T-cell (primary cell): ENCODE measurements at regions of chr2 and their contacts with region 1.

Region 1: DNA sequence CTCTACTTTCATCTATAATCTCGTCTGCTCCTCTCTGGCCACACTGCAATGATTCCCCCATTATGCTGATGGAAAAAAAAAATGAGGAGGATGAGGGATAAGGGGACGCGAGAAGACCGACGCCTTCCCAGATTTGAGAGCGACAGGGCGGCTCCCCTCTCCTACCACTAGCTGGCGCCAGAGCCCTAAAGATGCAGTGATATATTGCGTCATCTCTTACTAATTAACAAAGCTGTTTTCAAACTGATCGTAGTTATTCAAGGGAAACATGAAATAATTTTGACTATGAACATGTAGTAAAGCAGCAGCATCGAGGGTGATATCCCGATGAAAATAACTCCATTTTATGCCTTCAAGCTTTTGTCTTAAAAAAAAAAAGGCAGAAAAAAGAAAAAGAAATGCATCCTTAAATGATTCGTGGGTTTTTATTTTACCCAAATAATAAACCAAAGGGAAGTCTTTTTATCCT is 48.0 kb upstream of the HNRNPA3 start:
- DNase-seq: peak; percentile 50 to 89 (median 73)
- ATAC-seq: peak; percentile 71 to 83 (median 80)
- H3K4me3 ChIP-seq: peak overlapping the region; percentile 2 to 31
- H3K4me3 Mint-ChIP-seq: no peak overlapping the region
- H3K27ac ChIP-seq: peak overlapping the region; percentile 47
- H3K27ac Mint-ChIP-seq: no peak overlapping the region
- H3K4me1 ChIP-seq: peaks cover 13 to 16% of the 10 kb centered on the region in 2 experiments
- H3K4me1 Mint-ChIP-seq: peaks cover 12 to 21% (median 20%) of the 10 kb centered on the region in 3 donors
- H3K27me3 ChIP-seq: no peaks in the 10 kb centered on the region
- H3K27me3 Mint-ChIP-seq: peaks cover 0 to 2% of the 10 kb centered on the region in 2 donors

Region 2: GRCh38 chr2:175218551-175218950 is 1946.1 kb before region 1 on chr2:
- CTCF ChIA-PET with region 1: no interaction called
- POLR2A ChIA-PET with region 1: no interaction called
- DNase-seq: no peak
- ATAC-seq: no peak
- H3K4me3 ChIP-seq: no peak overlapping the region
- H3K4me3 Mint-ChIP-seq: no peak overlapping the region
- H3K27ac ChIP-seq: no peak overlapping the region
- H3K27ac Mint-ChIP-seq: no peak overlapping the region
- H3K4me1 ChIP-seq: no peaks in the 10 kb centered on the region
- H3K4me1 Mint-ChIP-seq: no peaks in the 10 kb centered on the region
- H3K27me3 ChIP-seq: peaks cover 2 to 3% of the 10 kb centered on the region in 2 experiments
- H3K27me3 Mint-ChIP-seq: peaks cover 24 to 31% of the 10 kb centered on the region in 2 donors

Region 3: GRCh38 chr2:176978921-176979320 is 185.7 kb before region 1 on chr2:
- CTCF ChIA-PET with region 1: no interaction called
- POLR2A ChIA-PET with region 1: no interaction called
- DNase-seq: no peak
- ATAC-seq: no peak
- H3K4me3 ChIP-seq: no peak overlapping the region
- H3K4me3 Mint-ChIP-seq: no peak overlapping the region
- H3K27ac ChIP-seq: no peak overlapping the region
- H3K27ac Mint-ChIP-seq: no peak overlapping the region
- H3K4me1 ChIP-seq: no peaks in the 10 kb centered on the region
- H3K4me1 Mint-ChIP-seq: no peaks in the 10 kb centered on the region
- H3K27me3 ChIP-seq: peaks cover 0 to 3% of the 10 kb centered on the region in 2 experiments
- H3K27me3 Mint-ChIP-seq: peaks cover 6 to 10% of the 10 kb centered on the region in 2 donors

Region 4: DNA sequence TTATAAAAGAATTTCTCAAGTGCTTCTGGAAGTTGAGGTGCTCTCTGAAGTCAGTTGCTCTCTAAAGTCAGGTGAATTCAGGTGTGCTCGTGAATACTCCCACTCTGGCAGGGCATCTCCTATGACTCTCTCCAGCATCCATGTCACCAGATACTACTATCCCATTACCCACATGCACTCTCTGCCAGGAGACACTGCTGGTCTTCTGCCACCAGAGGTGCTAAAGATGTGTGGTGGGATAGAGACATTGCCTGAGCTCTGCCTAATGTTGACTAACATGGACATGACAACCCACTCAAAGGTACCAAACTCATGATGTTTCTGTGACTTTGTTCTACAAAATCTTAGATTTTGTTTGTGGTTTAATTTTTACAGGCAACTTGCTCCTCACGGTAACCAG is 58.4 kb before region 1 on chr2:
- CTCF ChIA-PET with region 1: no interaction called
- POLR2A ChIA-PET with region 1: no interaction called
- DNase-seq: peak in 1 of 35 experiments; percentile 2
- ATAC-seq: no peak
- H3K4me3 ChIP-seq: no peak overlapping the region
- H3K4me3 Mint-ChIP-seq: no peak overlapping the region
- H3K27ac ChIP-seq: no peak overlapping the region
- H3K27ac Mint-ChIP-seq: no peak overlapping the region
- H3K4me1 ChIP-seq: no peaks in the 10 kb centered on the region
- H3K4me1 Mint-ChIP-seq: no peaks in the 10 kb centered on the region
- H3K27me3 ChIP-seq: no peaks in the 10 kb centered on the region
- H3K27me3 Mint-ChIP-seq: peaks cover 18 to 32% of the 10 kb centered on the region in 2 donors

Region 5: DNA sequence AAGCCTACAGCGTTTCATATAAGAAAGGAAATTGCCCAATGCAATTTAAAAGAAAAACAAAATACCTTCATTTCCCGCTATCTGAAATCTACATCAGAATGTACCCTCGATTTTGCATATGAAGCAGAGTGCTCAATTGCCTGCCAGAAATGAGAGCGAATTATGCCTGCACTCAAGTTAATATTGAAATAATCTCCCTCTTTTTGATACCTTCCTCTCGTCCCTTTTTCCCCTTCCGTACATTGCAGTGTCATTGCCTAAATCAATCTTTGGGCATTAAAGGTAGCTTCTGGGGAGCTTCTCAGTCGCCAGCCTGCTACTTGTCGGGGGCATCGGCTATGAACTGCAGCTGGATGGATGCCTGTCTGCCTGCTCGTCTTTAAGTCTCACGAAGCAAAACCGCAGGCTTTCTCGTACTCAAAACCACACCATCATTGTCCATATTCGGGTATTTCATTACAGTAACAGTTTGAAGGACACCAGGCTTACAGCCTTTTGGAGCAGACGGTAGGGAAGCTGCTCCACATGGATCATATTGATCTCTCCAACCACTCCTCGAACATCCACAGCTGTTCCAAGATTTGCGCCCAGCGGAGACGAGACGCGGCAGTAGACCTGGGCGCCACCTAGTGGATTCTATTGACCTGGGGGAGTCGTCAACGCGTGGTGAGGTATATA is 16.0 kb before region 1 on chr2:
- CTCF ChIA-PET with region 1: interaction called, 18 to 58 read pairs
- POLR2A ChIA-PET with region 1: no interaction called
- DNase-seq: peak; percentile 37 to 85 (median 64)
- ATAC-seq: peak; percentile 89 to 93 (median 91)
- H3K4me3 ChIP-seq: peak overlapping the region; percentile 47 to 57
- H3K4me3 Mint-ChIP-seq: peak overlapping the region; percentile 81 to 91 (median 84)
- H3K27ac ChIP-seq: no peak overlapping the region
- H3K27ac Mint-ChIP-seq: peak overlapping the region in 1 of 2 donors; percentile 63
- H3K4me1 ChIP-seq: peaks cover 8 to 9% of the 10 kb centered on the region in 2 experiments
- H3K4me1 Mint-ChIP-seq: peaks cover 12 to 17% (median 13%) of the 10 kb centered on the region in 3 donors
- H3K27me3 ChIP-seq: peaks cover 4 to 8% of the 10 kb centered on the region in 2 experiments
- H3K27me3 Mint-ChIP-seq: peaks cover 32 to 34% of the 10 kb centered on the region in 2 donors

Region 6: GRCh38 chr2:177229448-177230242 is 65.0 kb after region 1 on chr2:
- CTCF ChIA-PET with region 1: interaction called, 3 to 12 read pairs
- POLR2A ChIA-PET with region 1: interaction called, 3 read pairs
- DNase-seq: no peak
- ATAC-seq: peak in 3 of 4 experiments; percentile 12 to 19 (median 15)
- H3K4me3 ChIP-seq: no peak overlapping the region
- H3K4me3 Mint-ChIP-seq: no peak overlapping the region
- H3K27ac ChIP-seq: no peak overlapping the region
- H3K27ac Mint-ChIP-seq: peak overlapping the region; percentile 33 to 40
- H3K4me1 ChIP-seq: no peaks in the 10 kb centered on the region
- H3K4me1 Mint-ChIP-seq: peaks cover 47 to 49% (median 49%) of the 10 kb centered on the region in 3 donors
- H3K27me3 ChIP-seq: no peaks in the 10 kb centered on the region
- H3K27me3 Mint-ChIP-seq: no peaks in the 10 kb centered on the region

Region 7: GRCh38 chr2:177263451-177264208 is 99.0 kb after region 1 on chr2:
- CTCF ChIA-PET with region 1: interaction called, 14 to 74 read pairs
- POLR2A ChIA-PET with region 1: interaction called, 6 to 33 read pairs
- DNase-seq: peak; percentile 83 to 98 (median 93)
- ATAC-seq: peak; percentile 65 to 74 (median 66)
- H3K4me3 ChIP-seq: peak overlapping the region; percentile 84 to 91
- H3K4me3 Mint-ChIP-seq: peak overlapping the region; percentile 96 to 97 (median 96)
- H3K27ac ChIP-seq: peak overlapping the region; percentile 98
- H3K27ac Mint-ChIP-seq: peak overlapping the region; percentile 98 to 99
- H3K4me1 ChIP-seq: peaks cover 30 to 33% of the 10 kb centered on the region in 2 experiments
- H3K4me1 Mint-ChIP-seq: peaks cover 53 to 58% (median 56%) of the 10 kb centered on the region in 3 donors
- H3K27me3 ChIP-seq: no peaks in the 10 kb centered on the region
- H3K27me3 Mint-ChIP-seq: no peaks in the 10 kb centered on the region

Region 8: DNA sequence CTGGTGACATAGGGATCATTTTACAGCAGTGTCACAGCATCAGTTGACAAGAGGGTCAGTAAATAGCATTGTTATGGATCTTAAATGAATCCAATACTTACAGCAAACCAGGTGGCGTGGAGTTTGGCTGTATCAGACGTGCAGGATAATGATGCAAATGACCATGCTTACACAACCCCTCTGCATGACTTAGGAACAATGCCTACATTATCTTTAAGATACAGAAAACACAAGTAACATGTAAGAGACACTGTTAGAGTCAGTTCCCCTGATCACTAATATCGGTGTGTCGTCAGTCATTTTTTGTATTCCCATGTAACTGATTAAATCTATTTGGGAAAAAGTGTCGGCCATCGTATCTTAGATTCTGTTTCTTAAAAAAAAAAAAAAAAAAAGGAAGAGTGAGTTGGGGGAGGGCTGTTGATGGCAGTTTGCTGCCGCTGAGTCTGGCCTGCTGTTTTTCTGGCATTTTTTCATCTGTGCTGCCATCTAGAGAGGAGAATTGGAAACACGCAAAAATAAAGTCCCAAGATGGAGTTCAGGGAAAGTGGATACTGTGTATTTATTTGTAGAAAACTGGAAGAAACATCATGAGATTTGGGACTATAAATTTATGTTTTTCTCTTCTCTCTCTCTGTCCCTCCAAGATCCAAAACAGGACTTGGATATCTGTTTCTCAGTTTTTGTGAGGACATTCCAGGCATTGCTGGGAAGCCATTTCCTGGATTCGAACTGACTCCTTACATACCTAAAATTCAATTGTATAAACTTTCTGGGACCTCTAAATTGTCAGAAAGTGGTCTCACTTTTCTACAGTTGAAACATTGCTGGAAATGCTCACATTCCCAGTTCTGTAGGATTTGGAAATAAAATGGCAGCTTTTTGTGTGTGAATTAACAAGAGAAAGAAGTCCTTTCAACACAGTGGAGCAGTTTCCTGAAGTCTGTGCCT is 167.7 kb after region 1 on chr2:
- CTCF ChIA-PET with region 1: interaction called, 55 to 145 read pairs
- POLR2A ChIA-PET with region 1: interaction called in 1 of 2 experiments, 4 read pairs
- DNase-seq: peak in 30 of 35 experiments; percentile 8 to 79 (median 23)
- ATAC-seq: peak; percentile 77 to 86 (median 79)
- H3K4me3 ChIP-seq: no peak overlapping the region
- H3K4me3 Mint-ChIP-seq: peak overlapping the region in 1 of 3 donors; percentile 13
- H3K27ac ChIP-seq: no peak overlapping the region
- H3K27ac Mint-ChIP-seq: peak overlapping the region in 1 of 2 donors; percentile 73
- H3K4me1 ChIP-seq: peaks cover 2 to 5% of the 10 kb centered on the region in 2 experiments
- H3K4me1 Mint-ChIP-seq: peaks cover 12 to 20% (median 17%) of the 10 kb centered on the region in 3 donors
- H3K27me3 ChIP-seq: no peaks in the 10 kb centered on the region
- H3K27me3 Mint-ChIP-seq: no peaks in the 10 kb centered on the region

Region 9: DNA sequence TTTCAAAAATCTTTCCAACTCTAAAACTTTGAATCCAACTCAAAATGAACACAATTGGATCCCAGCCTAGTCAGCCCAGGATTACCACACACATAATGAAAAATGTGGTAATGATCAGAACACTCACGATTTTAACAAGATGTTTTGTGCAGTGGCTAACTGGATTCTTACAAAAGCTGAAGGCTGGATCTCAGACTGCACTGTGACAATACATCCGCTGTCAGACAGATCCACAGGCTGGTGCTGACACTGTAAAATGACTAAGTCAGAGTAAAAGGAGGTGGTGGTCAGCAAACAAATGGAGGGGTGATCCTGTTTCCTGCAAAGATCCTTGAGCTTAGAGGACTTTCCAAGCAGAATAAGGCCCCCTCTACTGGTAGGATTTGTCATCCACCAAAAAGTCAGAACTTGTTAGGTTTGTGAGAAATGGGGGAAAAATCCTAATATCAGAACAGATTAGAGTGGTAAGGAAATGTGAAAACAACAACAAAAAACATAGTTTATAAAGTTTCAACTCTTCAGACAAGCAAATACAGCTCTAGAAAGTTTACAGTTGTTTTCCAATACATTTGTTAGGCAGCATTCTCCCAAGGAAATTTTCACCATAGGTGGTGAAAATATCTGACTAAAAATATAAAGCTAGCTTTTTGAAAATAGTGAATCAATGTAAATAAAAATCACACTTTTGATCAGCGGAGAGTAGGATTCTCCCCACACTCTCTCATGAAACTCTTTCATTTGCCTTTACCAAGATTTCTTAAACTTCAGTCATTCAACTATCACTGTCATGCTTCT is 439.9 kb after region 1 on chr2:
- CTCF ChIA-PET with region 1: interaction called in 1 of 2 experiments, 17 read pairs
- POLR2A ChIA-PET with region 1: no interaction called
- DNase-seq: peak in 1 of 35 experiments; percentile 38
- ATAC-seq: no peak
- H3K4me3 ChIP-seq: no peak overlapping the region
- H3K4me3 Mint-ChIP-seq: no peak overlapping the region
- H3K27ac ChIP-seq: no peak overlapping the region
- H3K27ac Mint-ChIP-seq: no peak overlapping the region
- H3K4me1 ChIP-seq: no peaks in the 10 kb centered on the region
- H3K4me1 Mint-ChIP-seq: no peaks in the 10 kb centered on the region
- H3K27me3 ChIP-seq: no peaks in the 10 kb centered on the region
- H3K27me3 Mint-ChIP-seq: peaks cover 9 to 12% of the 10 kb centered on the region in 2 donors